ENCODE measurements at regions of chr22 and their contacts with region 1.

Region 1: GRCh38 chr22:40525249-40525884 is 111.2 kb downstream of the MRTFA start:
- DNase-seq: no peak
- H3K4me3 ChIP-seq: no peak overlapping the region
- H3K27ac ChIP-seq: no peak overlapping the region
- H3K27me3 ChIP-seq: no peaks in the 10 kb centered on the region
- CTCF ChIP-seq: peak; percentile 73

Region 2: GRCh38 chr22:40509401-40510134 is 15.8 kb before region 1 on chr22:
- CTCF ChIA-PET with region 1: interaction called, 16 read pairs
- POLR2A ChIA-PET with region 1: interaction called, 3 read pairs
- DNase-seq: peak; percentile 79
- H3K4me3 ChIP-seq: 0 out of 2 replicates have a peak overlapping the region, but pooled peaks have one; percentile 7
- H3K27ac ChIP-seq: peak overlapping the region; percentile 94
- H3K27me3 ChIP-seq: no peaks in the 10 kb centered on the region
- CTCF ChIP-seq: no peak

Region 3: DNA sequence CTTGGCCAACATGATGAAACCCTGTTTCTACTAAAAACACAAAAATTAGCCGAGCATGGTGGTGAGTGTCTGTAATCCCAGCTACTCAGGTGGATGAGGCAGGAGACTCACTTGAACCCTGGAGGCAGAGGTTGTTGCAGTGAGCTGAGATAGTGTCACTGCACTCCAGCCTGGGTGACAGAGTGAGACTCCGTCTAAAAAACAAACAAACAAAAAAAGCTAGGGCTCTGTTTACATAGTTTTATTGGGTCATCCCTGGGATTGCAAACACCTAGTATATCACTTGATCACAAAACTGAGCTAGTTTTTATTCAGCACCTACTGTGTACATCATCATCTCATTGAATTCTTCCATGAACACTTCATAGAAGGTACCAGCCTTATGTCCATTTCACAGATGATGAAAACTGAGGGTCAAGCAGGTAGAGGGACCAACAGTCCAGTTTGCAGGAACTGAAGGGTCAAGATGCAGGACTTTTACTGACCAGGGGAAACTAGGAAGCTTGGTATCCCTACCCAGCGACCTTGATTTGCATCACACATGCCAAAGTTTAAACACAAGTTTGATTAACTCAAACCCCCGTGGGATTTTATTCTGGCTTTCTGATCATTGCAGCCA is 120.3 kb after region 1 on chr22:
- CTCF ChIA-PET with region 1: interaction called, 36 read pairs
- POLR2A ChIA-PET with region 1: no interaction called
- DNase-seq: no peak
- H3K4me3 ChIP-seq: no peak overlapping the region
- H3K27ac ChIP-seq: no peak overlapping the region
- H3K27me3 ChIP-seq: no peaks in the 10 kb centered on the region
- CTCF ChIP-seq: no peak

Region 4: GRCh38 chr22:40748388-40748970 is 223.1 kb after region 1 on chr22:
- CTCF ChIA-PET with region 1: no interaction called
- POLR2A ChIA-PET with region 1: interaction called, 14 read pairs
- DNase-seq: no peak
- H3K4me3 ChIP-seq: no peak overlapping the region
- H3K27ac ChIP-seq: no peak overlapping the region
- H3K27me3 ChIP-seq: no peaks in the 10 kb centered on the region
- CTCF ChIP-seq: no peak

Measured in AG04450 (cell line).